PC-9 (cell line): ENCODE measurements at regions of chr9 and their contacts with region 1.

Region 1: GRCh38 chr9:127021664-127022363 is 100.6 kb downstream of the ANGPTL2 start:
- DNase-seq: no peak
- H3K4me3 ChIP-seq: no peak overlapping the region
- H3K27ac ChIP-seq: no peak overlapping the region
- H3K4me1 ChIP-seq: peaks cover 29% of the 10 kb centered on the region
- H3K27me3 ChIP-seq: no peaks in the 10 kb centered on the region
- CTCF ChIP-seq: no peak

Region 2: GRCh38 chr9:127033789-127034188 is 12.0 kb after region 1 on chr9:
- CTCF ChIA-PET with region 1: no interaction called
- POLR2A ChIA-PET with region 1: interaction called, 20 read pairs
- intact Hi-C with region 1: no loop called
- DNase-seq: peak in 1 of 2 experiments; percentile 37
- H3K4me3 ChIP-seq: no peak overlapping the region
- H3K27ac ChIP-seq: no peak overlapping the region
- H3K4me1 ChIP-seq: peaks cover 10% of the 10 kb centered on the region; the same call in 1 of the 2 replicates
- H3K27me3 ChIP-seq: no peaks in the 10 kb centered on the region
- CTCF ChIP-seq: no peak